Activated CD4-positive, alpha-beta T cell treated with anti-CD3 and anti-CD28 coated beads, Interleukin-2, amount 10 ng/mL, durations not matched to agents 24 days and 14 days (primary cell): ENCODE measurements at regions of chr1 and their contacts with region 1.

Region 1: DNA sequence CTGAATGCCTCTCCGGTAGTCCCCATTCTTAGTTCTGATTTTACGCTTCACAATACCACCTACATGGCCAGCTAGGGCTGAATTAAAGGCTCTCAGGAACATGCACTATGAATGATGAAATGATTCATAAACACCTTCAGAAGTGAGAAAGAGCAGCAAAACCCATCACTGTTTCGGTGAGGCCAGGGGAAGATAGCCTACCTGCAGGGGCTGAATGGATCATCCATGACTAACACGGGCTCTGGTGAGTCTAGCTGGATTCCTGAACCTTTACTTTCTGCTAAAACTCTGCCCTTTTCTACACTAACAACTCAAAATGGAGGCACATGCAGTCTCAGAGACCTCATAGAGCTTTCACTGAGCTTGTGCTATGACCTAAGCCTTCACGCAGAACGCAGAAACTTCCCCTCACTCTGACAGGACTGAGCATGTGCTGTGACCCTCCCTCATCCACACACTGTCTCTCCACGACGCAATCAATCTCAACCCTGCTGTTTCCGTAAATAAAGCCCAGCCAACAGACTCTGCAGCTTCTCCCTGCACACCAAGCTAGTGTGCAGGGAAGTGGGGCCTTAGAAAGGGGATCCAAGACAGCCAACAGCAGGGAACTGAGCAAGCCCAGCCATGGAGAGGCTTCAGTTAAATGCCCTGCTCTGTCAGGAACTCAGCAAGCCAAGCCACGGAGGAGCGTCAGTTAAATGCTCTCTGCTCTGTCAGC is 207.8 kb downstream of the SLC45A1 start:
- DNase-seq: peak; percentile 92
- H3K4me3 Mint-ChIP-seq: no peak overlapping the region
- H3K27ac Mint-ChIP-seq: no peak overlapping the region
- H3K4me1 Mint-ChIP-seq: peaks cover 38% of the 10 kb centered on the region
- H3K27me3 Mint-ChIP-seq: no peaks in the 10 kb centered on the region

Region 2: DNA sequence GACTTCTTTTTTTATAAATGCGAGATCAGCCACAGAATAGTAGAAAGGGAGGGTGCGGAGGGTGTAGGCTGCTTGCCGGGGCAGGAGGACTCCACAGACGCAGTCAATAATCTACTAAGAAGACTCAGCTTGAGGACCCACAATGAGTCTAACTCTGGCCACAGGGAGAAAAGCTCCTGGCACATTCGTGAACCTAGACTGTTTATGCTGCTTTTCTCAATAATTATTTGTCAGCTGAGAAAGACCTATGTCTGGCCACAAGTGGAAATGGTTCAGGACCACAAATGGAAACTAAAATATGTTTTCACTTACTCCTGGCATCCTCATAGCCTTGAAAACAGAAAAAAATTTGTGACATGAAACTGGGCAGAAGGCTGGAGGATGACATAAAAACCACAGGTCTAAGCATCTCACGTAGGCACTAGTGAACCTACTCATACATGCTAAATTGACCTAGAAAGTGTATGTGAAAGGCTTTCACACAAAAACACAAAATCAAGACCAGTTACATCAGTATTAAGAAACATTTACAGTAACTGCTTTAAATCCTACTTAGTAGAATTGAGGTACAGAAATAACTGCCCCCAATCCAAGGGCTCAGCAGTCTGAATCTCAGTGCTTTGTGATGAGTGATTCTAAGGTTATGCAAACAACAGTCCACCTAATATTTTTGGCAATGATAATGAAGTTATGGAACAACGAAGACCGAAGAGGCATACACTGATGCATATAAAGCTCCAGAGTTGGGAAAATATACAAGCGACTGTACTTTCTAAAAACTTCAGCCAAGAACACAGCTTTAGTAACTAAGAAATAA is 48.3 kb before region 1 on chr1:
- intact Hi-C with region 1: loop called (anchors 1 kb)
- DNase-seq: peak; percentile 68
- H3K4me3 Mint-ChIP-seq: peak overlapping the region; percentile 54
- H3K27ac Mint-ChIP-seq: peak overlapping the region; percentile 71
- H3K4me1 Mint-ChIP-seq: peaks cover 49% of the 10 kb centered on the region
- H3K27me3 Mint-ChIP-seq: no peaks in the 10 kb centered on the region

Region 3: GRCh38 chr1:8510041-8510823 is 15.5 kb before region 1 on chr1:
- intact Hi-C with region 1: loop called (anchors 1 kb)
- DNase-seq: peak; percentile 85
- H3K4me3 Mint-ChIP-seq: peak overlapping the region; percentile 56
- H3K27ac Mint-ChIP-seq: peak overlapping the region; percentile 89
- H3K4me1 Mint-ChIP-seq: peaks cover 37% of the 10 kb centered on the region
- H3K27me3 Mint-ChIP-seq: no peaks in the 10 kb centered on the region

Region 4: GRCh38 chr1:8554956-8555534 is 29.3 kb after region 1 on chr1:
- intact Hi-C with region 1: loop called (anchors 1 kb)
- DNase-seq: no peak
- H3K4me3 Mint-ChIP-seq: no peak overlapping the region
- H3K27ac Mint-ChIP-seq: peak overlapping the region; percentile 83
- H3K4me1 Mint-ChIP-seq: peaks cover 41% of the 10 kb centered on the region
- H3K27me3 Mint-ChIP-seq: no peaks in the 10 kb centered on the region

Region 5: GRCh38 chr1:8687039-8687438 is 161.3 kb after region 1 on chr1:
- intact Hi-C with region 1: no loop called
- DNase-seq: no peak
- H3K4me3 Mint-ChIP-seq: peak overlapping the region; percentile 1
- H3K27ac Mint-ChIP-seq: no peak overlapping the region
- H3K4me1 Mint-ChIP-seq: peaks cover 39% of the 10 kb centered on the region
- H3K27me3 Mint-ChIP-seq: no peaks in the 10 kb centered on the region